A673 (cell line): ENCODE measurements at regions of chr16 and their contacts with region 1.

Region 1: GRCh38 chr16:56681939-56682702 is at the start of gene MT1X:
- DNase-seq: peak; percentile 93
- H3K4me3 ChIP-seq: peak within 1 kb of the TSS; percentile 51
- H3K27ac ChIP-seq: peak within 1 kb of the TSS; percentile 35
- H3K4me1 ChIP-seq: no peaks in the 10 kb centered on the region
- H3K27me3 ChIP-seq: no peaks in the 10 kb centered on the region
- CTCF ChIP-seq: no peak
- total RNA-seq, gene MT1X: 30.0 and 74.3 TPM in 2 replicates

Region 2: GRCh38 chr16:56608043-56608875 is 73.9 kb before region 1 on chr16 and contains the start of gene MT2A:
- CTCF ChIA-PET with region 1: no interaction called
- POLR2A ChIA-PET with region 1: no interaction called
- intact Hi-C with region 1: loop called (anchors 5 kb)
- DNase-seq: peak; percentile 97
- H3K4me3 ChIP-seq: peak within 1 kb of the TSS; percentile 73
- H3K27ac ChIP-seq: peak within 1 kb of the TSS; percentile 72
- H3K4me1 ChIP-seq: peaks cover 34% of the 10 kb centered on the region
- H3K27me3 ChIP-seq: no peaks in the 10 kb centered on the region
- CTCF ChIP-seq: no peak
- total RNA-seq, gene MT2A: 81.8 and 218 TPM in 2 replicates